ENCODE measurements at regions of chr5 and their contacts with region 1.

Region 1: DNA sequence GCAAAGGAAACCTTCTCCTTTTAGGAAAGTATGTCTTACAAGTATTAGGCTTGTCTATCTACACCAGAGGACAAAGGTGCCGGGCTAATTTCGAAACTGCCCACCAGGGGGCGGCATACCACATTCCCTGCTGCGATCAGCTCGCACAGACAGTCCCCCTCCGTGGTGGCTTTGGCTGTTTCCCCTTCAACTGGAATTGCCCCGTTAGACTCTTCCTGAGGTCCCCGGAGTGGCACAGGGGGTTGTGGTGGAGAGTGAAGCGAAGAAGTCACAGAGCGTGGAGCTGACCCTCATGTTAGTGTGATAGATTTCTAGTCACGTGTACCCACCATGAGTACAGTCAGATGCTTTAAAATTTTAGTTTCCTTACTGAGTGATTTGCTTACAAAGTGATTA is 17.5 kb downstream of the PTTG1 start:
- DNase-seq: peak; percentile 93
- ATAC-seq: peak; percentile 78
- H3K4me3 Mint-ChIP-seq: peak overlapping the region; percentile 74
- H3K27ac Mint-ChIP-seq: peak overlapping the region; percentile 97
- H3K4me1 Mint-ChIP-seq: peaks cover 35% of the 10 kb centered on the region
- H3K27me3 Mint-ChIP-seq: peaks cover 4% of the 10 kb centered on the region

Region 2: DNA sequence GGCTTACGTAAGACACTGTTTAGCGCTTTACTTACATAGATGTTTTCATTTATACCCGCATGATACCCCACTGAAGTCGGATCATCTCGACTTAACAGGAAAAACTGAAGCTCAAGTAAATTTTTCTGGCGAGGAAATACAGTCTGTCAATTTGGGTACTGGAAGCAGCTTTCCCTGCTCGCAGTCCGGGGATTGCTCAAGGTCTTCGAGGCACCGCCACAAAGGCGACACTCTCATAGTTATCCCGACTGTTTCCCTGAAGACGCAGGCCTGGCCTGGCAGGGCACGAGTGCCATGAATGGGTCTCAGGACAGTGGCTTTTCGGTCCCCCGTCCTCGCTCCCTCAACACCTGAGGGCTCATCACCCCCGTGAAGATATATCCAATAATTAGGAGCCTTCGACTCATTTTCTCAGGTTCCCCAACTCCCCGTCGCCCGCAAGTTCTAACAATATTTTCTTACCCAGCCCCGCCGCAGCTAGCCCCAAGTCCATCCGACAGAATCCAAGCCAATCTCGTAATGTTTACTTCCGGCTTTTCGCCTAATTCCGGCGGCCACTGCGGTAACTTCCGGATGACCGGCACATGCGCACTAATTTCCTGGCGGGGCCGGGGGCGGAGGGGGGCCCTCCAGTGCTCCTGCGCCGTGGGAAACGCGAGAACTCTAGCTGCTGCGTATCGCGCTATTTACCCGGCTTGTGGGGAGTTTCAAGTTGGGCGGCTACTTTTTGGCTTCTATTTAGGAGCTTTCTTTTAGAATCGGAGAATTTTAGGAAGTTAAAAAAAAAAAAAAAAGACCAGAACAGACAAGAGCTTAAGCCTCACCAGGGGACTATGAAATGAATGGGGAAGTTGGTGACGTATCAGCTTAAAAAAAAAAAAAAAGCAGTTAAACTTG is 20.4 kb before region 1 on chr5 and contains the start of gene SLU7:
- CTCF ChIA-PET with region 1: interaction called, 107 read pairs
- POLR2A ChIA-PET with region 1: interaction called, 3 read pairs
- intact Hi-C with region 1: loop called (anchors 1 kb)
- DNase-seq: peak; percentile 96
- ATAC-seq: peak; percentile 80
- H3K4me3 Mint-ChIP-seq: peak within 1 kb of the TSS; percentile 96
- H3K27ac Mint-ChIP-seq: peak within 1 kb of the TSS; percentile 99
- H3K4me1 Mint-ChIP-seq: peaks cover 57% of the 10 kb centered on the region
- H3K27me3 Mint-ChIP-seq: no peaks in the 10 kb centered on the region
- total RNA-seq, gene SLU7: 41.1 to 53.0 TPM

Region 3: DNA sequence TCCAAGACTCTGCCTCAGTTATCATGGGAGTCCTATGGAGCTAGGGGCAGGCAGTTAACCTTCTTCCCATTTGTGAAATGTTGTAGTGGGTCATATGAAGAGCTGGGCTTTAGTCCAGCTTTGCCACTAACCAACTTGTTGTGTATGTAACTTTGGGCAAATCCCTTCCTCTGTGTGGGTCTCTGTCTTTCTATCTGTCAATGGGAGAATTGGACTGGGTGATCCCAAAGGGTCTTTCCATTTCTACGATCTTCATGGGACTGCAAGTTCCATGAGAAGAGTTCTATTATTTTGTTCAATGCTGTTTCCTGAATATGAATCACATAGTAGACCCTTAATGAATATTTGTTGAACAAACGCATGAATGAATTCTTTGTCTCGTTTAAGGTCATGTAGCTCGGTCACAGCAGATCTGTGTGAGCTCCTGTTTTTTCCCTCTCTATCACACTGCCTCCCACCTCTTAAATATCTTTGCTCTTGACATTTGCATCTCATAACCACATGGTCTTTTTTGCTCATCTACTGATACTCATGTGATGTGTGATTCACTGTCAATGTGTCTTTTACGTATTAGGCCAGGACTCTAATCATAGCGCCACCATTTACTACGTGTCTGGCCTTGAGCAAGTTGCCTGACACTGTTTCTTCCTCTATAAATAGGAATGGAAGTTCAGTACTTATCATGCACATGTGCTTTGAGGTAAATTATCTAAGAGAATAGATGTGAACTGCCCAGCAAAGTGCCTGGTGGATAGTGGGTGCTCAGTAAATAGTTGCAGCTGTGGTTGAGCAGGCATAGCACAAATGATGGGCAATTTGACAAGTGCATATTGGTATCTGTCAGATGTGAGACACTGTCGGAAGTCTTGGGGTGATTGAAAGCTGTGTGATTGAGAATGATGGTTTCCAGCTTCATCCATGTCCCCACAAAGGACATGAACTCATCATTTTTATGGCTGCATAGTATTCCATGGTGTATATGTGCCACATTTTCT is 19.9 kb after region 1 on chr5:
- CTCF ChIA-PET with region 1: interaction called, 80 read pairs
- POLR2A ChIA-PET with region 1: no interaction called
- intact Hi-C with region 1: no loop called
- DNase-seq: no peak
- ATAC-seq: peak; percentile 71
- H3K4me3 Mint-ChIP-seq: no peak overlapping the region
- H3K27ac Mint-ChIP-seq: peak overlapping the region; percentile 32
- H3K4me1 Mint-ChIP-seq: peaks cover 22% of the 10 kb centered on the region
- H3K27me3 Mint-ChIP-seq: no peaks in the 10 kb centered on the region

Region 4: GRCh38 chr5:160486573-160486972 is 47.4 kb after region 1 on chr5:
- CTCF ChIA-PET with region 1: interaction called, 15 read pairs
- POLR2A ChIA-PET with region 1: no interaction called
- intact Hi-C with region 1: no loop called
- DNase-seq: peak; percentile 48
- ATAC-seq: peak; percentile 80
- H3K4me3 Mint-ChIP-seq: no peak overlapping the region
- H3K27ac Mint-ChIP-seq: peak overlapping the region; percentile 56
- H3K4me1 Mint-ChIP-seq: peaks cover 33% of the 10 kb centered on the region
- H3K27me3 Mint-ChIP-seq: no peaks in the 10 kb centered on the region

Region 5: GRCh38 chr5:160508780-160509361 is 69.7 kb after region 1 on chr5:
- CTCF ChIA-PET with region 1: interaction called, 100 read pairs
- POLR2A ChIA-PET with region 1: interaction called, 18 read pairs
- intact Hi-C with region 1: loop called (anchors 1 kb)
- DNase-seq: peak; percentile 76
- ATAC-seq: peak; percentile 73
- H3K4me3 Mint-ChIP-seq: no peak overlapping the region
- H3K27ac Mint-ChIP-seq: peak overlapping the region; percentile 82
- H3K4me1 Mint-ChIP-seq: peaks cover 45% of the 10 kb centered on the region
- H3K27me3 Mint-ChIP-seq: peaks cover 6% of the 10 kb centered on the region

Region 6: DNA sequence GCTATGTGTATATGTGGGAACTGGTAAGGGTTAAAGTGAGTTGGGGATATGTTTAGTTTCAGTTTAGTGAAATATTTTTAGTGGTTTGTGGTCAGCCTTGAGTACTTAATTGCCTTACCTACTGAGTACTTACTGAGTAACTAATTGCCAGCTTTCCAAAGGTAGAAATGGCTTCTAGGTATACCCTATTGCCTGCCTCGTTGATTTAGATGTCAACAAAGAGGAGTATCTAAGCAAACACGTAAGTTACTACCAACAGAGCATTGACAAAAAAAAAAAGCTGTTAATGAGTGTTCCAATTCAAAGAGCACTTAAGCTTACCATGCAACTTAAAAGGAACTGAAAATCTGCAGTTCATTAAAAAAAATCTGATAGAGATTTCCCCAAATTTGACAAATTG is 404.0 kb after region 1 on chr5:
- CTCF ChIA-PET with region 1: interaction called, 3 read pairs
- POLR2A ChIA-PET with region 1: no interaction called
- intact Hi-C with region 1: loop called in 1 of 2 experiments (anchors 10 kb)
- DNase-seq: no peak
- ATAC-seq: no peak
- H3K4me3 Mint-ChIP-seq: no peak overlapping the region
- H3K27ac Mint-ChIP-seq: no peak overlapping the region
- H3K4me1 Mint-ChIP-seq: no peaks in the 10 kb centered on the region
- H3K27me3 Mint-ChIP-seq: no peaks in the 10 kb centered on the region